B cell (primary cell): ENCODE measurements at regions of chr1 and their contacts with region 1.

Region 1: GRCh38 chr1:207052911-207053769 is at the start of gene PFKFB2:
- DNase-seq: peak; percentile 98
- ATAC-seq: peak; percentile 87
- H3K4me3 ChIP-seq: peak within 1 kb of the TSS; percentile 53 to 92 (median 73)
- H3K4me3 Mint-ChIP-seq: peak within 1 kb of the TSS; percentile 99
- H3K27ac ChIP-seq: peak within 1 kb of the TSS; percentile 87 to 96
- H3K27ac Mint-ChIP-seq: peak within 1 kb of the TSS; percentile 99
- H3K4me1 ChIP-seq: peaks cover 39 to 42% of the 10 kb centered on the region in 2 donors
- H3K4me1 Mint-ChIP-seq: peaks cover 53% of the 10 kb centered on the region
- H3K27me3 ChIP-seq: no peaks in the 10 kb centered on the region
- H3K27me3 Mint-ChIP-seq: no peaks in the 10 kb centered on the region
- CTCF ChIP-seq: peak; percentile 10
- total RNA-seq, gene PFKFB2: 15.6 and 18.2 TPM in 2 replicates

Region 2: DNA sequence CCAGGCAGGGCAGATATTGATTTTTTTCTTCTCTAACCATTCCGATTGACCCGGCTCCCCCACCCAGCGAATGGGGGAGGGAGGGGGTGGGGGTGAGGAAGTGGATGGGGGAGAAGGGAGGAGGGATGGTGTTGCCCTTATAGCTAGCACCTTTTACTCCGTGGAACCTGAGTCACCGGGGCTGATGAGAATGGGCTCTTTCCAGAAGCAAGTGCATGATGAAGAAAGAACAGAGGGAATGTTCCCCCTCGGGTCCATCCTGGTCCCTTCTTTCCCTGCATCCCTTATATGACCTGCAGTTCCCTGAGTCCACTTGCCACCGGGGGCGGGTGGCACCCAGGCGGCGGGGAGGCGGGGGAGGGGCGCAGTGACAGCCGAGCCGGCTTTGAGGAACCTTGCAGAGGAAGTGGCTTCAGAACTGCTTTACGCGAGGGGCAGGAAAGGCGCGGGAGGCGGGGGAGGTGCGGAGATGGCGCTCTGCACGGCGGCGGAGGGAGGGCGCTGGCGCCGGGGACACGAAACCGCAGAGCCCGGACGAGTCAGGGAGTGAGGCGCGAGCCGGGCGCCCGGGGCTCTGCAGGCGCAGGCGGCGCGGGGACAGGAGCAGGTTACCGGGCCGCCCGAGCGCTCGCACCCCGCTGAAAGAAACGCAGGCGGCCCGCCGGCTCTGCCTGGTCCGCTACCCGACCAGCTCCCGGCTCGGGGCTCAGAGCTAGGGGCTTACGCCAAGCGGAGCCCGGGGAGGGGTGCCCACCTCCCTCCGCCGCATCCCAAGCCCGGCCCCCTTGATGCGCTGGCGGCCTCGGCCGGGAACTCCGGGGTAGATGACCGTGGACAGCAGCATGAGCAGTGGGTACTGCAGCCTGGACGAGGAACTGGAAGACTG is 496.1 kb before region 1 on chr1:
- CTCF ChIA-PET with region 1: no interaction called
- POLR2A ChIA-PET with region 1: no interaction called
- intact Hi-C with region 1: loop called (anchors 5 kb)
- DNase-seq: peak; percentile 89
- ATAC-seq: peak; percentile 79
- H3K4me3 ChIP-seq: peak overlapping the region; percentile 85 to 100 (median 97)
- H3K4me3 Mint-ChIP-seq: peak overlapping the region; percentile 99
- H3K27ac ChIP-seq: peak overlapping the region; percentile 86 to 95
- H3K27ac Mint-ChIP-seq: peak overlapping the region; percentile 99
- H3K4me1 ChIP-seq: peaks cover 46 to 69% of the 10 kb centered on the region in 2 donors
- H3K4me1 Mint-ChIP-seq: peaks cover 67% of the 10 kb centered on the region
- H3K27me3 ChIP-seq: no peaks in the 10 kb centered on the region
- H3K27me3 Mint-ChIP-seq: no peaks in the 10 kb centered on the region
- CTCF ChIP-seq: no peak

Region 3: DNA sequence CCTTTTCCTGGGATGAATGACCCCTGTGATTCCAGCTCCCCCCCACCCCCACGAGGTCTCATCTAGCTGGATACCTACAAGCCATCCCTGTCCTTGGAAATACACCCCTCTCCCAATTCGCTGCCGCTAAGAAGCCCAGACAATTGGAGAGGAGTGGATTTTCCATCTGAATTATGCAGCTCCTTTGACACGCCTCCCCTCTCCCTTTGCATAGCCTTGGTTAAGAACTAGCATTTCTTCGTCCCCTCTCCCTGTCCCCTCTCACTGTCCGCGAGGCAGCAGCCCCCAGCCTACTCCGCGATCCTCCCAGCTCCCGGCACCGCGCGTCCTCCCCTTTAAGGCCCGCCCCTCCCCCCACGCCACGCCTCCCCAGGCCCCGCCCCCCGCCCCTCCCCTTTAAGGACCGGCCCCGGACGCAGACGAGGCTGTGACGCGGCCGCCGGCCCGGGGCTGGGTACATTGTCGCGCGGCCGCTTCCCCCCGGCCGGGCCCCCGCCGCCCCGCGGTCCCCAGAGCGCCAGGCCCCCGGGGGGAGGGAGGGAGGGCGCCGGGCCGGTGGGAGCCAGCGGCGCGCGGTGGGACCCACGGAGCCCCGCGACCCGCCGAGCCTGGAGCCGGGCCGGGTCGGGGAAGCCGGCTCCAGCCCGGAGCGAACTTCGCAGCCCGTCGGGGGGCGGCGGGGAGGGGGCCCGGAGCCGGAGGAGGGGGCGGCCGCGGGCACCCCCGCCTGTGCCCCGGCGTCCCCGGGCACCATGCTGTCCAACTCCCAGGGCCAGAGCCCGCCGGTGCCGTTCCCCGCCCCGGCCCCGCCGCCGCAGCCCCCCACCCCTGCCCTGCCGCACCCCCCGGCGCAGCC is 368.4 kb before region 1 on chr1 and contains the start of gene MAPKAPK2:
- CTCF ChIA-PET with region 1: interaction called, 3 read pairs
- POLR2A ChIA-PET with region 1: no interaction called
- intact Hi-C with region 1: loop called (anchors 5 kb)
- DNase-seq: peak; percentile 83
- ATAC-seq: peak; percentile 70
- H3K4me3 ChIP-seq: peak within 1 kb of the TSS; percentile 69 to 91 (median 87)
- H3K4me3 Mint-ChIP-seq: peak within 1 kb of the TSS; percentile 100
- H3K27ac ChIP-seq: peak within 1 kb of the TSS; percentile 76 to 86
- H3K27ac Mint-ChIP-seq: peak within 1 kb of the TSS; percentile 96
- H3K4me1 ChIP-seq: peaks cover 54 to 72% of the 10 kb centered on the region in 2 donors
- H3K4me1 Mint-ChIP-seq: peaks cover 82% of the 10 kb centered on the region
- H3K27me3 ChIP-seq: no peaks in the 10 kb centered on the region
- H3K27me3 Mint-ChIP-seq: no peaks in the 10 kb centered on the region
- CTCF ChIP-seq: no peak
- total RNA-seq, gene MAPKAPK2: 85.8 and 91.1 TPM in 2 replicates

Region 4: DNA sequence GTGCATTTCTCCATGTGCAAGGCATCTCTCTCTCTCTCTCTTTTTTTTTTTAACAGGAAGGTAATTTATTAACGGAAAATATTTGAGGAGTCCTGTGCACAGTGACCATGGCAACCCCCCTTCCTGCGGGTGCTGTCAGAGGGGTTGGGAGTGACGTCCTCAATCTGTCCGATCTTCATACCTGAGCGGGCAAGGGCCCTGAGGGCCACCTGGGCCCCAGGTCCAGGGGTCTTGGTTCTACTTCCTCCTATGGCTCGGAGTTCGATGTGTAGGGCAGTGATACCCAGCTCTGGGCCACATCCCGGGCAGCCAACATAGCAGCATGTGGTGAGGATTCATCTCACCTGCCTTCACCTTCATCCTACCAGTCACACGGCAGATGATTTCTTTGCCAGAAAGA is 357.4 kb before region 1 on chr1:
- CTCF ChIA-PET with region 1: no interaction called
- POLR2A ChIA-PET with region 1: no interaction called
- intact Hi-C with region 1: no loop called
- DNase-seq: no peak
- ATAC-seq: no peak
- H3K4me3 ChIP-seq: no peak overlapping the region
- H3K4me3 Mint-ChIP-seq: no peak overlapping the region
- H3K27ac ChIP-seq: no peak overlapping the region
- H3K27ac Mint-ChIP-seq: no peak overlapping the region
- H3K4me1 ChIP-seq: peaks cover 36 to 37% of the 10 kb centered on the region in 2 donors
- H3K4me1 Mint-ChIP-seq: peaks cover 87% of the 10 kb centered on the region
- H3K27me3 ChIP-seq: no peaks in the 10 kb centered on the region
- H3K27me3 Mint-ChIP-seq: no peaks in the 10 kb centered on the region
- CTCF ChIP-seq: no peak

Region 5: GRCh38 chr1:206925106-206925736 is 127.9 kb before region 1 on chr1:
- CTCF ChIA-PET with region 1: no interaction called
- POLR2A ChIA-PET with region 1: no interaction called
- intact Hi-C with region 1: loop called (anchors 5 kb)
- DNase-seq: peak; percentile 84
- ATAC-seq: peak; percentile 53
- H3K4me3 ChIP-seq: peak overlapping the region in 1 of 5 experiments; percentile 17
- H3K4me3 Mint-ChIP-seq: no peak overlapping the region
- H3K27ac ChIP-seq: peak overlapping the region; percentile 88 to 96
- H3K27ac Mint-ChIP-seq: no peak overlapping the region
- H3K4me1 ChIP-seq: peaks cover 82 to 84% of the 10 kb centered on the region in 2 donors
- H3K4me1 Mint-ChIP-seq: peaks cover 37% of the 10 kb centered on the region
- H3K27me3 ChIP-seq: no peaks in the 10 kb centered on the region
- H3K27me3 Mint-ChIP-seq: no peaks in the 10 kb centered on the region
- CTCF ChIP-seq: peak; percentile 19

Region 6: DNA sequence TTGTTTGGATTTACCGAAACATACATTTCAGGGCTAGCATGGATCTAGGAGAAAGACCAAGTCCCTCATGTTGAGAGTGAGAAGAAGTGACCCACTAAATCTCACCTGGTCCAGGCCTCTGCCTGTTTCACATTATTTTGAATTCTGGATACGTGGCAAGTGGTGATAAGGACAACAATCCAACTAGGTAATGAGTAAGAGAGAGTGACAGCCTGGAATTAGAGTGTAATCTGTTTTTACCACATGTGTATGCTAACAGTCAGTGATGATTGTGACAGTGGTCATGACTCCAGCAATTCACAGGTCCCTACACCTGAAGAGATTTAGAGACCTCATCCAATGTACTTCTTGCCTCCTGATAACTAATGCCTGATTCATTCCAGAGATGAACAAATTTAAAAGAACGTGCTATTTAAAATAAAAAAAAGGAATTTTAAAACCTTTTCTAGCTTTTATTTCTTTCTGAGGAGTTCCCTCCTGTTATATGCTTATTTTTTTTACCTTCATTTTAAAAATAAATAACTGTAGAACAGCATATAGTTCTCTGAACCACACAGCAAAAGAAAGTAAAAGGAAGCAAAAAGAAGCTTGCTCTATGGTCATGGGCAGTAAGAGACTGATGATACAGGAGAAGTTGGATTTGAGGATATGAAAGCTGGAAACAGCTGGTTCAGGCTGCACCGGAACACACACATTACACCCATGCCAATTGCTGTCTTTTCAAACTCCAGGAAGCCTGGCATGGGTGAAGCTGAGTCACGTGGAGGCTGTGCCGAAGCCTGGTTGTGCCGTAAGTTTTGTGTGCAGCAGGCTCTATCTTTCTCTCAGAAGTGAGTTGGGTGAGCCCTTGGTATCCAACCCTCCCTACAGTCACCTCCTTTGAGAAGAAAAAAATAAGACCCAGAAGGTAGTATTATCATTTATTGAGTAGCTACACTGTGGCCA is 35.3 kb before region 1 on chr1:
- CTCF ChIA-PET with region 1: no interaction called
- POLR2A ChIA-PET with region 1: no interaction called
- intact Hi-C with region 1: no loop called
- DNase-seq: no peak
- ATAC-seq: no peak
- H3K4me3 ChIP-seq: no peak overlapping the region
- H3K4me3 Mint-ChIP-seq: no peak overlapping the region
- H3K27ac ChIP-seq: no peak overlapping the region
- H3K27ac Mint-ChIP-seq: no peak overlapping the region
- H3K4me1 ChIP-seq: no peaks in the 10 kb centered on the region
- H3K4me1 Mint-ChIP-seq: no peaks in the 10 kb centered on the region
- H3K27me3 ChIP-seq: peaks cover 0 to 17% (median 5%) of the 10 kb centered on the region in 4 experiments
- H3K27me3 Mint-ChIP-seq: peaks cover 47% of the 10 kb centered on the region
- CTCF ChIP-seq: no peak

Region 7: DNA sequence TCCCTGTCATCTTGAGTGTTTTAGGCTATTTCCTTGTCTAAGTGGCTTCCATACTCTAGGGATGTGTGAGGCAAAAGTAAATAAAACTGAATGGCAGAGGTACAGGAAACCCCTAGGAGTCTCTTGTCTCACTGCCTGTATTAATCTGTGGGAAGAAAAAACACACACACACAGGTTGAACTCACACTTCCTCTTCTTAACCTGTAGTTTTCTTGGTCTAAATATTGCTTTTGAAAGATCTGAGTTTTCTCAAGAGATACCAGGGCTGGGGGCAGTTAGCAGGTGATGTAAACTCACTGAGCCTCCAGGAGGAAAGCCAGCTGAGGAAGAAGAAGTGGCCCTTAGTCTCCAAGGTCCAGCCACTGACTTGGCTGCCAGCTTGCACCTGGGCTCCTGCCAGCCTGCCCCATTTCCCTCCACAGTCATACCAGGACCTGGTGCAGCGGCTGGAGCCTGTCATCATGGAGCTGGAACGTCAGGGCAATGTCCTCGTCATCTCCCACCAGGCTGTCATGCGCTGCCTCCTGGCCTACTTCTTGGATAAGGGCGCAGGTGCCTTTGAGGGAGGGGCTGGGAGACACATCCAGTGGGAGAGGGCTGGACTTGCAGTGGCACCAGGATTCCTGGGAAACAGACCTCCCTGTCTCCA is 16.8 kb after region 1 on chr1:
- CTCF ChIA-PET with region 1: interaction called, 54 read pairs
- POLR2A ChIA-PET with region 1: no interaction called
- intact Hi-C with region 1: no loop called
- DNase-seq: peak; percentile 29
- ATAC-seq: no peak
- H3K4me3 ChIP-seq: no peak overlapping the region
- H3K4me3 Mint-ChIP-seq: no peak overlapping the region
- H3K27ac ChIP-seq: peak overlapping the region in 1 of 2 donors; percentile 37
- H3K27ac Mint-ChIP-seq: peak overlapping the region; percentile 39
- H3K4me1 ChIP-seq: peaks cover 20 to 23% of the 10 kb centered on the region in 2 donors
- H3K4me1 Mint-ChIP-seq: peaks cover 22% of the 10 kb centered on the region
- H3K27me3 ChIP-seq: no peaks in the 10 kb centered on the region
- H3K27me3 Mint-ChIP-seq: no peaks in the 10 kb centered on the region
- CTCF ChIP-seq: no peak

Region 8: GRCh38 chr1:207077470-207078377 is 24.6 kb after region 1 on chr1:
- CTCF ChIA-PET with region 1: interaction called, 76 read pairs
- POLR2A ChIA-PET with region 1: no interaction called
- intact Hi-C with region 1: loop called (anchors 1 kb)
- DNase-seq: peak; percentile 83
- ATAC-seq: peak; percentile 95
- H3K4me3 ChIP-seq: no peak overlapping the region
- H3K4me3 Mint-ChIP-seq: no peak overlapping the region
- H3K27ac ChIP-seq: no peak overlapping the region
- H3K27ac Mint-ChIP-seq: no peak overlapping the region
- H3K4me1 ChIP-seq: no peaks in the 10 kb centered on the region
- H3K4me1 Mint-ChIP-seq: peaks cover 1% of the 10 kb centered on the region
- H3K27me3 ChIP-seq: no peaks in the 10 kb centered on the region
- H3K27me3 Mint-ChIP-seq: no peaks in the 10 kb centered on the region
- CTCF ChIP-seq: peak; percentile 96

Region 9: DNA sequence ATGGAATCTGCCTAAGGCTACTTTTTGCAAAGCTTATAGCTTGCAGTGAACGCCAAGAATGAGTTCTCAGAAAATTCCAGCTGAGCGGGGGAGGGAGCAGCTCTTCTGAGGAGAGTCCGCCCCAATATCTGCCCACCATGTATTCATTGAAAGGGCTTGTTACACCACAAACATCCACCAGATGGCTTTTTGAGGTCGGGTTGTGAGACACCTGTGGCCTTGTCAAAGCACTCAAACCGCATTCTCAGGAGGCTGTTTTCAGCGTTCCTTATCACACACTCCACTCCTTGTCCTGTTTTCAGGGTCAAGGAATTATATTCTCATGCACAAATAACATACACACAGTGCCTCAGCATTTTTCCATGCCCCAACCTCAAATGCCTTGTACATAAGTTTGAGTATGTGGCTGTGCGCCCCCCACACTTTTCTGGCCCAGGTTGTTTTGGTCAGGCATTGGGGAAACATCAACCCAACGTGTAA is 31.6 kb after region 1 on chr1:
- CTCF ChIA-PET with region 1: interaction called, 76 read pairs
- POLR2A ChIA-PET with region 1: interaction called, 3 read pairs
- intact Hi-C with region 1: no loop called
- DNase-seq: peak; percentile 82
- ATAC-seq: peak; percentile 84
- H3K4me3 ChIP-seq: no peak overlapping the region
- H3K4me3 Mint-ChIP-seq: no peak overlapping the region
- H3K27ac ChIP-seq: no peak overlapping the region
- H3K27ac Mint-ChIP-seq: no peak overlapping the region
- H3K4me1 ChIP-seq: peaks cover 14 to 15% of the 10 kb centered on the region in 2 donors
- H3K4me1 Mint-ChIP-seq: peaks cover 13% of the 10 kb centered on the region
- H3K27me3 ChIP-seq: no peaks in the 10 kb centered on the region
- H3K27me3 Mint-ChIP-seq: no peaks in the 10 kb centered on the region
- CTCF ChIP-seq: peak; percentile 77